IMR-90 (cell line): ENCODE measurements at regions of chr19 and their contacts with region 1.

Region 1: GRCh38 chr19:39237200-39238184 is 7.3 kb downstream of the IFNL3 start:
- DNase-seq: no peak
- ATAC-seq: no peak
- H3K4me3 ChIP-seq: no peak overlapping the region
- H3K27ac ChIP-seq: no peak overlapping the region
- H3K4me1 ChIP-seq: no peaks in the 10 kb centered on the region
- H3K27me3 ChIP-seq: peaks cover 27% of the 10 kb centered on the region
- CTCF ChIP-seq: no peak
- POLR2A ChIP-seq: no peak
- RAD21 ChIP-seq: no peak

Region 2: GRCh38 chr19:39199025-39199424 is 38.5 kb before region 1 on chr19:
- CTCF ChIA-PET with region 1: no interaction called
- POLR2A ChIA-PET with region 1: interaction called, 11 read pairs
- dilution Hi-C with region 1: no loop called
- in situ Hi-C with region 1: no loop called
- intact Hi-C with region 1: no loop called
- DNase-seq: peak; percentile 63
- ATAC-seq: peak; percentile 95
- H3K4me3 ChIP-seq: no peak overlapping the region
- H3K27ac ChIP-seq: no peak overlapping the region
- H3K4me1 ChIP-seq: no peaks in the 10 kb centered on the region; the same call in 1 of the 2 replicates
- H3K27me3 ChIP-seq: peaks cover 57% of the 10 kb centered on the region
- CTCF ChIP-seq: no peak
- POLR2A ChIP-seq: no peak
- RAD21 ChIP-seq: no peak